BJ (cell line): ENCODE measurements at regions of chr16 and their contacts with region 1.

Region 1: DNA sequence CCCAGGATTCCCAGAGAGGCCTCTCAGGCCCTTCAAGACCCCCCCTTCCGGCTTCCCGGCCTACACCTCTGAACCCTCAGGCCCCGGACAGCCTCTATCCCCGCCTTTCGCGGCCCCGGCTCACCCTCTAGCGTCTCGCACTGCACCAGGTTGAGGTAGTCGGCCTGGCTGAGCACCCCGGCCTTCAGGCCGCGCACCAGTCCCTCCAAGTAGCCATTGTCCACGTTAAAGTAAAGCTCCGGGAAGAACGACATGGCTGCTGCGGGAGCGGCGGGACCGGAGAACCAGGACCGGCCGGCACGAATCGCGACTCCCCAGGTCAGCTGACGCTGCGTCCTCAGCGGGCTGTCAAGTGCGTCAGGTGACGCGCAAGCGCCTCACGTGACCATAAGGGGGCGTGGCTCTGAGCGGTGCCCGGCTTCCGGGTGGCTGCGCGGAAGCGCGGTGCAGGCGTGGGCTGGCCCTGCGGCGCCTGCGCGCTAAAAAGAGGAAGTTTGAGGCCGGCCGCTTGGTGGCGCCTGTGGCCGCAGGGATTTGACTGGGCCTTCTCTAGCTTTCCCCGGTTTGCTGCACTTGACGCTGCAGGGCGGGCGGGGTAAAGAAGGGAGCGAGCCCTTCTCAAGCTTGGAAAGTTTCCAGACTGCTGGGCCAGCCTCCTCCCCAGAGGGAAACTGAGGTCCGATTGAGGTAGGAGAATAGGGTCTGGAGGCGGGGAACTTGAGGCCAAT is at the start of gene ATP6V0D1:
- DNase-seq: peak; percentile 89
- H3K4me3 ChIP-seq: peak within 1 kb of the TSS; percentile 86
- H3K27me3 ChIP-seq: no peaks in the 10 kb centered on the region
- CTCF ChIP-seq: peak; percentile 87
- polyA plus RNA-seq, gene ATP6V0D1: 111 and 155 TPM in 2 replicates

Region 2: DNA sequence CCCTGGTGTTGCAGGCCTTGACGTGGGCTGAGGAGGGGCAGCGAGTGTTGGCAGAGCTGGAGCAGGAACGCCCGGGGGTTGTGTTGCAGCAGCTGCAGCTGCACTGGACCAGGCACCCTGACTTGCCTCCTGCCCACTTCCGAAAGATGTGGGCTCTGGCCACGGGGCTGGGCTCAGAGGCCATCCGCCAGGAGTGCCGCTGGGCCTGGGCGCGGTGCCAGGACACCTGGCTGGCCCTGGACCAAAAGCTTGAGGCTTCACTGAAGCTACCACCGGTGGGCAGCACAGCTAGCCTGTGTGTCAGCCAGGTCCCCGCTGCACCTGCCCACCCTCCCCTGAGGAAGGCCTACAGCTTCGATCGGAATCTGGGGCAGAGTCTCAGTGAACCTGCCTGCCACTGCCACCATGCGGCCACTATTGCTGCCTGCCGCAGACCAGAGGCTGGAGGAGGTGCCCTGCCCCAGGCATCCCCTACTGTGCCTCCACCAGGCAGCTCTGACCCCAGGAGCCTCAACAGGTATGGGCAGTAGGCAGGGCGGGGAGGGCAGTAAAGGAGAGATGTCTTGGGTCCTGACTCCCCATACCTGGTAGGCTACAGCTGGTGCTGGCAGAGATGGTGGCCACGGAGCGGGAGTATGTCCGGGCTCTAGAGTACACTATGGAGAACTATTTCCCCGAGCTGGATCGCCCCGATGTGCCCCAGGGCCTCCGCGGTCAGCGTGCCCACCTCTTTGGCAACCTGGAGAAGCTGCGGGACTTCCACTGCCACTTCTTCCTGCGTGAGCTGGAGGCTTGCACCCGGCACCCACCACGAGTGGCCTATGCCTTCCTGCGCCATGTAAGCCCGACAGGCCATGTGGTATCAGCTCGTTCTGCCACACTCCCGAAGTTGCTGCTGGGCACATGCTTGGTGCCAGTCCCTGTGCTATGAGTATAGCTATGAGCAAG is 196.0 kb before region 1 on chr16:
- CTCF ChIA-PET with region 1: no interaction called
- POLR2A ChIA-PET with region 1: no interaction called
- DNase-seq: no peak
- H3K4me3 ChIP-seq: no peak overlapping the region
- H3K27me3 ChIP-seq: no peaks in the 10 kb centered on the region
- CTCF ChIP-seq: peak; percentile 55

Region 3: DNA sequence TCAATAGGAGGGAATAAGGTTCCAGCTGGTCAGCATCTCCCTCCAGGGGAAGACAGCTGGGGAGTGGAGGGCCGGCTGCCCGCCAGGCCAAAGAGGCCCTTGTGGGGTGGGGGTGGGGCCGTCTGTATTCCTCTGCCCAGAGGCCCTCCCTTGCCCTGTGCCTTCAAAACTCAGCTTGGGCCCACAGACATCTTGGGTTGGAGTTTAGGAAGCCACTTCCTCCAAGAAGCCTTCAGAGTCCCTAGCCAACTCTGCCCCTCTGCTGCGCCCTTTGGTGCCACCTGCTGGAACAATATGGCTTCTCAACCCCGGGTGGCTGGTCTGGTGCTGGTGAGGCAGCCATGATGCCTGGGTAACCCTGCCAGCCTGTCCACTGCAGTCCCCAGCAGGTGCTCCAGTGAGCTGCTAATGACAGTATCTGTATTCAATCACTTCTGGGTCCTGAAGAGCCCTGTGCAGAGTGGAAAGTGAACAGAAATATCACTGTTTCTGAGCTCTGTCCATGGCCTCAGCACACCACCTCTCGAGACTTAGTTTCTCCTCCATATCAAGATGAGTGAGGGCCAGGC is 33.4 kb before region 1 on chr16:
- CTCF ChIA-PET with region 1: interaction called, 11 read pairs
- POLR2A ChIA-PET with region 1: no interaction called
- DNase-seq: no peak
- H3K4me3 ChIP-seq: no peak overlapping the region
- H3K27me3 ChIP-seq: no peaks in the 10 kb centered on the region
- CTCF ChIP-seq: peak; percentile 56

Region 4: GRCh38 chr16:67499106-67499505 is 18.1 kb after region 1 on chr16:
- CTCF ChIA-PET with region 1: interaction called, 23 read pairs
- POLR2A ChIA-PET with region 1: no interaction called
- DNase-seq: no peak
- H3K4me3 ChIP-seq: no peak overlapping the region
- H3K27me3 ChIP-seq: no peaks in the 10 kb centered on the region
- CTCF ChIP-seq: no peak